ENCODE measurements at regions of chr4 and their contacts with region 1.

Region 1: DNA sequence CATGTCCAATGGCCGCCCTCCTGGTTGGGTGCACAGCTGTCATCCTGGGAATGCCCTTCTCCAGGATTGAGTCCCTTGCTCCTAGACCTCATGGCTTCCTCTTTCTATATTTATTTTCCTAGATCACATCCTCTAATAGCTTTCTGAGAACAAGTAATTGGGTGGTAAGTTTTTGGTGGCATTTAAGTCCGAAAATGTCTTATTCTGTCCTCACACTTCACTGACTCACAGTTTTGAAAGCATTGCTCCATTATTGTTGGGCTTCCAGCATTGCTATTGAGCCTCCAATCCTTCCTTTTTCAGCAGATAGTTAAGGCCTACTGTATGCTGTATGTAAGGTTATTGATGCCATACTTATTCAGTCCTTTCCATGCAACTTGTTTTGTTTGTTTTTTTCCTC is 25.9 kb downstream of the PGM2 start:
- DNase-seq: no peak
- ATAC-seq: no peak
- H3K4me3 ChIP-seq: no peak overlapping the region
- H3K4me3 Mint-ChIP-seq: no peak overlapping the region
- H3K27ac ChIP-seq: no peak overlapping the region
- H3K27ac Mint-ChIP-seq: no peak overlapping the region
- H3K4me1 ChIP-seq: no peaks in the 10 kb centered on the region
- H3K4me1 Mint-ChIP-seq: no peaks in the 10 kb centered on the region
- H3K27me3 ChIP-seq: no peaks in the 10 kb centered on the region
- H3K27me3 Mint-ChIP-seq: no peaks in the 10 kb centered on the region

Region 2: DNA sequence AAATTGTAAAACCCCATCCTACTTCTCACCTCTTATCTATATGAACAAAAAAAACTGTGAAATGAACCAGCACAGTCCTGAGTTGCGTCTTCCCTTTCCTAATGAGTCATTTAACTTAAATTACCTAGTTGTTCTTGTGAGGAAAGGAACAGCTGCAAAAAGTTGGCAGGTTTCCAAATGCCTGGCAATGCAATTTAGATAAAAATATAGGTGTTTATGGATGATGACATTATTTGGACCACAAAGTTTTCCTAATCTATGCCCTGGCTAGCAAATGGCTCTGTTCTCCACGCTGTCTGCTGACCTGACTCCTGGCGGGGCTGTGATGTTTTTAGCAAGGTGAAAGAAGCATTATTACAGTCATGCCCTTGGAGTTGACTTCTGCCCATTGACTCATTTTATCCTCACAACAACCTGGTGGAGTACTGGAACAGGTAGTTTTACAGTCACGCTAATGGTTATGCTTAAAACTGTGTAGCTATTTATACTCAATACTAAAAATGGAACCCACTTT is 136.4 kb before region 1 on chr4:
- CTCF ChIA-PET with region 1: interaction called in 1 of 2 experiments, 12 read pairs
- POLR2A ChIA-PET with region 1: no interaction called
- DNase-seq: peak in 1 of 35 experiments; percentile 5
- ATAC-seq: no peak
- H3K4me3 ChIP-seq: no peak overlapping the region
- H3K4me3 Mint-ChIP-seq: no peak overlapping the region
- H3K27ac ChIP-seq: no peak overlapping the region
- H3K27ac Mint-ChIP-seq: no peak overlapping the region
- H3K4me1 ChIP-seq: no peaks in the 10 kb centered on the region
- H3K4me1 Mint-ChIP-seq: peaks cover 0 to 2% (median 0%) of the 10 kb centered on the region in 3 donors
- H3K27me3 ChIP-seq: no peaks in the 10 kb centered on the region
- H3K27me3 Mint-ChIP-seq: peaks cover 0 to 2% of the 10 kb centered on the region in 2 donors

Region 3: GRCh38 chr4:37826295-37827029 is 25.9 kb before region 1 on chr4 and contains the start of gene PGM2:
- CTCF ChIA-PET with region 1: no interaction called
- POLR2A ChIA-PET with region 1: no interaction called
- DNase-seq: peak; percentile 77 to 93 (median 88)
- ATAC-seq: peak; percentile 99 to 100 (median 99)
- H3K4me3 ChIP-seq: peak within 1 kb of the TSS; percentile 85 to 89
- H3K4me3 Mint-ChIP-seq: peak within 1 kb of the TSS; percentile 95 to 97 (median 95)
- H3K27ac ChIP-seq: peak within 1 kb of the TSS; percentile 60
- H3K27ac Mint-ChIP-seq: peak within 1 kb of the TSS; percentile 83 to 97
- H3K4me1 ChIP-seq: peaks cover 11 to 16% of the 10 kb centered on the region in 2 experiments
- H3K4me1 Mint-ChIP-seq: peaks cover 42 to 47% (median 43%) of the 10 kb centered on the region in 3 donors
- H3K27me3 ChIP-seq: no peaks in the 10 kb centered on the region
- H3K27me3 Mint-ChIP-seq: no peaks in the 10 kb centered on the region
- total RNA-seq, gene PGM2: 13.8 to 18.2 (median 16.6) TPM